PC-9 (cell line): ENCODE measurements at regions of chr7 and their contacts with region 1.

Region 1: DNA sequence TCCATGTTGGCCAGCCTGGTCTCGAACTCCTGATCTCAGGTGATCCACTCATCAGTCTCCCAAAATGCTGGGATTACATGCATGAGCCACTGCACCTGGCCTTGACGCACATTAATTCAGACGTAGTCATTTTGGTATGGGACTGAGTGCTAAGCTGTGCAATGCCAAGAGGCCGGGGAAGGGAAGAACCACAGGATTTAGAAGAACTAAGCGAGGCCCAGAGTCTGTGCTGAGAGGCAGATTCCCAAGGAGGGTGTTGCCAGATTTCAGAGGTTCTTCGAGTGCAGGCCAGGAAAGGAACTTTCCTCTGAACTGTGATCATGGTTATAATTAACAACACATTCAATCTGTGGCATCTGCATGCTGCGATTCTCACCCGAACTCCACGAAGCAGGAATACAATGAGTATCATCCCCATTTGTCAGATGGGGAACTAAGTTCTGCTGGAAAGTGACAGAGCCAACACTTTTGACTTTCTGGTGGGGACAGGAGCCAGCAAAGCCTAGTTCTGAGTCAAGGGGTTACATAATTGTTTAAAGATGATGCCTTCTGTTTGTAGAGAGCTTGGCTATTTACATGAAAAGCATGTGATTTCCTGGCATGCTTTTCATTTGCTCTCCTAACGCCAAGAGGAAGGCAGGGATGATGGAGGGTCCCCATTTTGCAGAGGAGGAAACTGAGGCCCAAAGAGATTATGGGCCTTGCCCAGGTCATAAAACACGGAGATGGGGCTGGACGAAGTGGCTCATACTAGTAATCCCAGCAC is 6.2 kb upstream of the ZAN start:
- DNase-seq: no peak
- H3K4me3 ChIP-seq: no peak overlapping the region
- H3K27ac ChIP-seq: no peak overlapping the region
- H3K4me1 ChIP-seq: peaks cover 19% of the 10 kb centered on the region
- H3K27me3 ChIP-seq: no peaks in the 10 kb centered on the region
- CTCF ChIP-seq: no peak

Region 2: DNA sequence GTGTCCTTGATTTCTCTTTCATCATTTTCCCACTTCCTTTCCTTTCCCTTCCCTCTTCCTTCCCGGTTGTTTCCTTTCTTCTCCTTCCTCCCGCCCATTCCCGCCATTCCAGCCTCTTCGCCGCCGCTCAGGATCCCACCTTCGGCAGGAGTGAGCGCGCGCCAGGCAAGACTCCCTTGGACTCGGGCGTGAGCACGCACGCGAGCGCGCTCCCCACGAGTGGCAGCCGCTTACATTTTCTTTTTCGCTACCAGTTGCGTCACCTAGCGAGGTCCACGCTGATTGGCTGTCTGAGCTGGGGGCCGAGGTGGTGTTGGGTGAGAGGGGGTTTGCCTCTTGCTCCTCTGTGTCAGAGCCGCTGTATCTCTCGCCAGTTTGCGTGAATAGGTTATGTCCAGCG is 18.0 kb after region 1 on chr7:
- CTCF ChIA-PET with region 1: no interaction called
- POLR2A ChIA-PET with region 1: interaction called, 16 read pairs
- intact Hi-C with region 1: no loop called
- DNase-seq: no peak
- H3K4me3 ChIP-seq: no peak overlapping the region
- H3K27ac ChIP-seq: no peak overlapping the region
- H3K4me1 ChIP-seq: no peaks in the 10 kb centered on the region
- H3K27me3 ChIP-seq: peaks cover 3% of the 10 kb centered on the region; the same call in 1 of the 2 replicates
- CTCF ChIP-seq: no peak

Region 3: DNA sequence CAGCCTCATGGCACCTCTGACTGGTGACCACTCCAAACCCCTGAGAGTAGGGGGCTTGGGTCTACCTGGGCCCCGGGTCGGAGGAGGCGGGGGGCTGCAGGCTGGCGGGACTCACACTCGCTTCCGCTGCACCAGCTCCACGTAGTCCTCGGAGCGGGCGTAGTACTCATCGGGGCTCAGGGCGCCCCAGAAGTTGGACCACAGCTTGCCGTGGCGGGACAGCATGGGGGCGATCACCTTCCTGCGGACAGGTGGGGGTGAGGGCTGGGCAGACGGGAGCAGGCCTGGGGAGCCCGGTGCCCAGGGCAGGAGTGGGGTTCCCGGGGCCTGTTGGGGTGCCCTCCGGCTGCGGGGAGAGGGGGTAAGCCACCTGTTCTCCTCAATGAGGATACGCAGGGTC is 484.3 kb after region 1 on chr7:
- CTCF ChIA-PET with region 1: no interaction called
- POLR2A ChIA-PET with region 1: no interaction called
- intact Hi-C with region 1: no loop called
- DNase-seq: no peak
- H3K4me3 ChIP-seq: no peak overlapping the region
- H3K27ac ChIP-seq: no peak overlapping the region
- H3K4me1 ChIP-seq: 0 out of 2 replicates have a peak, but pooled peaks cover 5% of the 10 kb centered on the region
- H3K27me3 ChIP-seq: no peaks in the 10 kb centered on the region
- CTCF ChIP-seq: no peak